GM23248 (cell line): ENCODE measurements at regions of chr3 and their contacts with region 1.

Region 1: GRCh38 chr3:16279010-16279801 is 14.2 kb downstream of the OXNAD1 start:
- DNase-seq: no peak
- H3K4me3 ChIP-seq: no peak overlapping the region
- H3K27ac ChIP-seq: no peak overlapping the region
- H3K4me1 ChIP-seq: no peaks in the 10 kb centered on the region
- H3K27me3 ChIP-seq: no peaks in the 10 kb centered on the region

Region 2: GRCh38 chr3:16090024-16090423 is 189.2 kb before region 1 on chr3:
- in situ Hi-C with region 1: no loop called
- DNase-seq: peak; percentile 96
- H3K4me3 ChIP-seq: no peak overlapping the region
- H3K27ac ChIP-seq: peak overlapping the region; percentile 67
- H3K4me1 ChIP-seq: peaks cover 40% of the 10 kb centered on the region
- H3K27me3 ChIP-seq: no peaks in the 10 kb centered on the region

Region 3: DNA sequence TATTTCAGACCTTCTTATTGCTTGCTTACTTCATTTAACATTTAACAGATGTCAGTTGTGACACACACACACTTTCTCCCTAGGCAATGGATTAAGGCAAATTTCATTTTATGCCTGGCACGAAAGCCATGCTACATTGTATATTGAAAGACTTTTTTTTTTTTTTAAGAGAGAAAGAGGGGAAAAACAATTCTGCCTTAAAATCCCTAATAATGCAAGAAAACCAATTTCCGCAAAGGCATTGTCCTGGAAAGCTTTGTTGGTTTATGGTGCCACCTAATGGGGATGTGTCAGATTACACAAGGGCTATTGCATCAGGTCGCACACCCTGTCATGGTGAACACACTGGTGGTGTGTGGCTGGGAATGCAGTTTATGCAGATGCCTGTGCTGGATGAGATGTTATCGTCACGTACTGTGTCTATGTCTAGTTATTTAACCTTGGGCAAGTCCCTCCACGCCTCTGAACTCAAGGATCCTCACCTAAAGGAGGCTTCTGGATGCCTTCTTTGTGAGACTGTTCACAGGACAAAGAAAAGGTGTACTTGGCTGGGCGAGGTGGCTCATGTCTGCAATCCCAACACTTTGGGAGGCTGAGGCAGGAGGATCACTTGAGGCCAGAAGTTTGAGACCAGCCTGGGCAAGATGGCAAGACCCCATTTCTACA is 271.6 kb after region 1 on chr3:
- in situ Hi-C with region 1: loop called (anchors 10 kb)
- DNase-seq: peak; percentile 91
- H3K4me3 ChIP-seq: peak overlapping the region; percentile 55
- H3K27ac ChIP-seq: no peak overlapping the region
- H3K4me1 ChIP-seq: peaks cover 14% of the 10 kb centered on the region
- H3K27me3 ChIP-seq: no peaks in the 10 kb centered on the region

Region 4: GRCh38 chr3:16647668-16648067 is 368.5 kb after region 1 on chr3:
- in situ Hi-C with region 1: no loop called
- DNase-seq: no peak
- H3K4me3 ChIP-seq: no peak overlapping the region
- H3K27ac ChIP-seq: no peak overlapping the region
- H3K4me1 ChIP-seq: no peaks in the 10 kb centered on the region
- H3K27me3 ChIP-seq: no peaks in the 10 kb centered on the region